ENCODE measurements at regions of chr1 and their contacts with region 1.

Region 1: DNA sequence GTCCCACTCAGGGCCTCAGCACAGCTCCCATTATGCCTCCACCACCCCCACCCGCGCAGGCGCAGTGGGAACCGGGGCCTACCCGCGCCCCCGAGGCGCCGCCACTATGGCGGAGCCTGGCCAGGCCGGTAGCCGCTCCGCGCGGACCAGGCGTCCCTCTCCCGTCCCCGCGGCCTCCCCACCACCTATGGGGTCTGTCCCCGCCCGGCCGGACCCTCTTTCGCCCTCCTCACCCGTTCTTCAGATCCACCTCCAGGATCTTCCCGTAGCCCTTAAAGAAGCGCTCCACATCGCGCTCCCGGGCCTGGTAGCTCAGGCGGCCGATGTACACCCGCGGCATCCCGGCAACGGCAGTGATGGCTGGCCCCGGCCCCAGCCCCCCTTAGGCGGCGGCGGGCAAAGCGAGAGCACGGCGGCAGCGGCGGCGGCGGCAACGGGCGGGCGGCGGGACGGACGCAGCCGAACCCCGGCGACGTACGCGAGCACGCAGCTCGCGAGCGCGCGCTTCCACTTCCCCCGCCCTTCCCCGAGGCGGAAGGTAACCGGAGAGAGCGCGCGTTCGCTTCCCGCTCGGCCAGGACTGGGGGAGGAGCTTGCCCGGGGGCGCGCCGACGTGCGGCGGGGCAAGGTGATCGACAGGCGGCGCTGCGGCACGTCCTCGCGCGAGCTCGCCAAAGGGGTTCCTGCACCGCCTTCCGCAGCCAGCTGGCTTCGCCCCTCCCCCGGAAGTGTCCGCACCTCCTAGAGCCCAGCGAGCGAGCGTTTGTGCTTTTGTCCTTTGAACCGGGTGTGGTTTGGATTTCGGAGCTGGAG is at the start of gene SRSF4:
- DNase-seq: peak; percentile 99
- H3K4me3 Mint-ChIP-seq: peak within 1 kb of the TSS; percentile 97
- H3K27ac Mint-ChIP-seq: peak within 1 kb of the TSS; percentile 92
- H3K4me1 Mint-ChIP-seq: peaks cover 53% of the 10 kb centered on the region
- H3K27me3 Mint-ChIP-seq: no peaks in the 10 kb centered on the region
- total RNA-seq, gene SRSF4: 129 and 135 TPM in 2 replicates

Region 2: GRCh38 chr1:28505406-28506187 is 676.0 kb before region 1 on chr1 and contains the start of gene RCC1:
- intact Hi-C with region 1: loop called (anchors 10 kb)
- DNase-seq: peak; percentile 96
- H3K4me3 Mint-ChIP-seq: peak within 1 kb of the TSS; percentile 100
- H3K27ac Mint-ChIP-seq: peak within 1 kb of the TSS; percentile 97
- H3K4me1 Mint-ChIP-seq: peaks cover 32% of the 10 kb centered on the region
- H3K27me3 Mint-ChIP-seq: peaks cover 7% of the 10 kb centered on the region
- total RNA-seq, gene RCC1: 130 and 135 TPM in 2 replicates

Region 3: DNA sequence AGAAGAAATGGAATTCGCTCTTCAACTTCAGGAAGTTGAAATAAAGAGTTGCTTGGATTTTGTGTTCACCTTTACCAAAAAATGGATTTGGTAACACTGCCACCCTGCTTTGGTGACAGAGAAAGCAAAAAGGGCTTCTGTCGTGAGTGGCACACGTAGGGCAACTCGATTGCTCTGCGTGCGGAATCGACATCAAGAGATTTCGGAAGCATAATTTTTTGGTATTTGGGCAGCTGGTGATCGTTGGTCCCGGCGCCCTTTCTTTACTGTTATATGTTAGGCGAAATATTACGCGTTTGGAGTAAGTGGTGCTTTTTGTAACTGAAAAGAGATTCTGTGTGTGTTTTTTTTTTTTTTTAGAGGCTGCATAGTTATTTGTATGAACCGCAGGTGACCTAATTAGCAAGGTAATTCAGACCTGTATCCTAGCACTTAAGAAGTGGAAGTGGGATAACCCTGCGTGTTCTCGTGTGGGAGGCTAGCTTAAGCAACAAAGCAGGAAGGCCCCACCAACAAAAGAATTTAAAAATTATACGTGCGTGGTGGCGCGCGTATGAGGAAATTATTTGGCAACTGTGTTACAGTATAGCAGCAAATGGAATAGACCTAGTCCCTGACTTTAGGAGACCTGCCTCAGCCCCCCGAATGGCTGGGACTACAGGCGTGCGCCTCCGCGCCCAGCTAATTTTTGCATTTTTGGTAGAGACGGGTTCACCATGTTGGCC is 533.0 kb before region 1 on chr1 and contains the start of gene RNU11:
- intact Hi-C with region 1: loop called (anchors 1 kb)
- DNase-seq: peak; percentile 86
- H3K4me3 Mint-ChIP-seq: peak within 1 kb of the TSS; percentile 92
- H3K27ac Mint-ChIP-seq: peak within 1 kb of the TSS; percentile 100
- H3K4me1 Mint-ChIP-seq: peaks cover 31% of the 10 kb centered on the region
- H3K27me3 Mint-ChIP-seq: peaks cover 2% of the 10 kb centered on the region
- total RNA-seq, gene RNU11: not detected in 2 replicates

Region 4: DNA sequence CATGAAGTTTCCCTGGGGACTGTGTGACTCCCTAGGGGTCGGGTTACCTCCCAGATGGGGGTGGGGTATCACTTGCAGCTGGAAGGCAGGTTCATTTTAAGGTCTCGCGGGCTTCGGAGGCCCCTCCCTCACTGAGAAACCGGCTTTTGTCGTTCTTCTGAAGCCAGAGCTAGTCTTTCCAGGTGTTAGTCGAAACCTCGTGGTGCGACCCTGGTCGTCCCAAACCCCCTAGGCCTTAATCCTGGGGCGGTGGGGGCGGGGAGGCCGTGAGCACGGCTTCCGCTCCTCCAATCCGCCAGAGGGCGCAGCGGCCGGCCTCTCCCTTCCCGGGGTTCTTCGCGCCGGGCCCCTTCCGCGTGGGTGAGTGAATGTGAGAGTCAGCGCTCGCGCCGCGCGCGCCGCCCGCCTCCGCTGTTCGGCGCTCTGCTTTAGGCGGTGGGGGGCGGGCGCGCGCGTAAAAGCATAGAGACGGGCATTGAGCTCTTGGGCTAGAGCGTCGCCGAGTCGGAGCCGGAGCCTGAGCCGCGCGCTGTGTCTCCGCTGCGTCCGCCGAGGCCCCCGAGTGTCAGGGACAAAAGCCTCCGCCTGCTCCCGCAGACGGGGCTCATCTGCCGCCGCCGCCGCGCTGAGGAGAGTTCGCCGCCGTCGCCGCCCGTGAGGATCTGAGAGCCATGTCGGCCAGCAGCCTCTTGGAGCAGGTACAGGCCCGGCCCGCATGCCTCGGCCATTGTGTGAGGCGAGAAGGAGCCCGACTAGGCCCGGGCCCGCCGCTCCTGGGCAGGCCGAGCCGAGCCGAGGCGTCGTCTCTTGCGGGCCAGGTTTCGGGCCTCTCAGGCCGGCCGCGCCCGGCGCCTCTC is 444.9 kb before region 1 on chr1 and contains the start of gene YTHDF2:
- intact Hi-C with region 1: loop called (anchors 1 kb)
- DNase-seq: peak; percentile 96
- H3K4me3 Mint-ChIP-seq: peak within 1 kb of the TSS; percentile 96
- H3K27ac Mint-ChIP-seq: peak within 1 kb of the TSS; percentile 93
- H3K4me1 Mint-ChIP-seq: peaks cover 27% of the 10 kb centered on the region
- H3K27me3 Mint-ChIP-seq: no peaks in the 10 kb centered on the region
- total RNA-seq, gene YTHDF2: 91.7 and 94.9 TPM in 2 replicates

Region 5: GRCh38 chr1:29124366-29125236 is 57.0 kb before region 1 on chr1:
- intact Hi-C with region 1: loop called (anchors 1 kb)
- DNase-seq: peak; percentile 46
- H3K4me3 Mint-ChIP-seq: peak overlapping the region; percentile 82
- H3K27ac Mint-ChIP-seq: peak overlapping the region; percentile 23
- H3K4me1 Mint-ChIP-seq: no peaks in the 10 kb centered on the region
- H3K27me3 Mint-ChIP-seq: peaks cover 29% of the 10 kb centered on the region

Region 6: GRCh38 chr1:29230553-29231378 is 49.1 kb after region 1 on chr1 and contains the start of gene MECR:
- intact Hi-C with region 1: loop called (anchors 2 kb)
- DNase-seq: peak; percentile 95
- H3K4me3 Mint-ChIP-seq: peak within 1 kb of the TSS; percentile 94
- H3K27ac Mint-ChIP-seq: peak within 1 kb of the TSS; percentile 84
- H3K4me1 Mint-ChIP-seq: peaks cover 23% of the 10 kb centered on the region
- H3K27me3 Mint-ChIP-seq: peaks cover 15% of the 10 kb centered on the region
- total RNA-seq, gene MECR: 34.5 and 36.4 TPM in 2 replicates

Region 7: GRCh38 chr1:29282924-29283811 is 101.5 kb after region 1 on chr1:
- intact Hi-C with region 1: no loop called
- DNase-seq: no peak
- H3K4me3 Mint-ChIP-seq: no peak overlapping the region
- H3K27ac Mint-ChIP-seq: no peak overlapping the region
- H3K4me1 Mint-ChIP-seq: peaks cover 6% of the 10 kb centered on the region
- H3K27me3 Mint-ChIP-seq: peaks cover 3% of the 10 kb centered on the region